ENCODE measurements at regions of chr1 and their contacts with region 1.

Region 1: DNA sequence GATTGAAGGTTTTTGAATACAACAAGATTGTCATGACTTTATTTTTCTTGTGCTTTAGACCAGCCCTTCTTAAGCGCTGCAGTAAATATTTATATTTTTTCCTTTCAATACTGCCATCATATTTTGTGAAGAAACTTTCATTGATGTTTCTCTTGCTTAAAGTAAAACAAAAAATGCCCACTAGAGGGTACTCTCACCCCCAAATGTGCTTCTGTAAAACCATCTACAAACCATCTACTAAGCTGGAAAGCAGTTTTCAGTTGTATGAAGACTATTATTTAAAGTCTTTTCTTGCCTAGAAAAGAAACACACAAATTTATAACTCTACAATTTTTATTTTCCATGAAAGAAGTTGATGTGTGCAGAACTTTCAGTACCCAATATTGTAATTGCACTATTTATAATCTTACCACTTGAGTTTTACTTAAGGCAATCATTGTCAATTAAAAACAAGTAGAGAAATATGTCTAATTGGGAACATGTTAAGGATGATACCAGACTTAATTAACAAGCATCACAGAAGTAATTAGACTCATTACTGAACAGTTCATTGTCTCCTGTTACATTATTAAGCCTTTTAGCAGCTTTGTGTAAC is 10.7 kb downstream of the LEPR start:
- DNase-seq: no peak
- H3K4me3 Mint-ChIP-seq: no peak overlapping the region
- H3K27ac Mint-ChIP-seq: no peak overlapping the region
- H3K4me1 Mint-ChIP-seq: peaks cover 30% of the 10 kb centered on the region
- H3K27me3 Mint-ChIP-seq: no peaks in the 10 kb centered on the region
- CTCF ChIP-seq: no peak

Region 2: DNA sequence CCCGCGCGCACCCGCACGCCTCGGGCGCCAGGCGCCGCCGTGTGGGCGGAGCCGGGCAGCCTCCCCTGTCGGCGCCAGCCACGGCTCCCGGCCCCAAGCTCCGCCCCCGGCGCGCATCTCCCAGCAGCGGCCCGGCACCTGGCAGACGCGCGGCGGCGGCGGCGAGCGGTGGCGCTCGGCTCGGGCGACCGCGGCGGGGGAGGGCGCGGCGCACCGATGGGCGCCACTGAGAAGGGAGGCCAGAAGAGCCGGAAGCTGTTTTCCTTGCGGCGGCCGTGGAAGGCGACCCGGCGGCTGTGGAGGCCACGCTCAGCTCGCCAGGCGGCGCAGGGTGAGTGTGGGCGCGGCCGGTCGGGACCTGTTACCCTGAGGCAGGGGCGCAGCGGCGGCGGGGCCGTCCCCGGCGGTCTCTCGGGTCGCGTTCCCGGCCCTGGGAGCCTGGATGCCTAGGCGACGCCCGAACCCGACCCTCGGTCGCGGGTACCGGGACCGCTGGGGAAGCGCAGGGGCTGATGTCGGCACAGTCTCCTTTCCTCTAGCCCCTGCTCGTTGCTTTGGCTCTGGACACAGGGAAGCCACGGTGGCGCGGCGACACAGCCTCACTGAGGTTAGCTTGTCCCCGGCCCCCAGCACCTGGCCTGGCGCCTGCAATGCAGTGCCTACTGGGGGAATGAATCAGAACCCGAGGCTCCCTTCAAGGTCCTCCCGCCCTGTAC is 176.7 kb before region 1 on chr1:
- CTCF ChIA-PET with region 1: no interaction called
- intact Hi-C with region 1: loop called (anchors 5 kb)
- DNase-seq: peak; percentile 93
- H3K4me3 Mint-ChIP-seq: peak overlapping the region; percentile 80
- H3K27ac Mint-ChIP-seq: peak overlapping the region; percentile 48
- H3K4me1 Mint-ChIP-seq: peaks cover 14% of the 10 kb centered on the region
- H3K27me3 Mint-ChIP-seq: no peaks in the 10 kb centered on the region
- CTCF ChIP-seq: no peak

Region 3: GRCh38 chr1:65509912-65510680 is 78.9 kb after region 1 on chr1:
- CTCF ChIA-PET with region 1: no interaction called
- intact Hi-C with region 1: no loop called
- DNase-seq: no peak
- H3K4me3 Mint-ChIP-seq: no peak overlapping the region
- H3K27ac Mint-ChIP-seq: no peak overlapping the region
- H3K4me1 Mint-ChIP-seq: no peaks in the 10 kb centered on the region
- H3K27me3 Mint-ChIP-seq: no peaks in the 10 kb centered on the region
- CTCF ChIP-seq: no peak

Region 4: DNA sequence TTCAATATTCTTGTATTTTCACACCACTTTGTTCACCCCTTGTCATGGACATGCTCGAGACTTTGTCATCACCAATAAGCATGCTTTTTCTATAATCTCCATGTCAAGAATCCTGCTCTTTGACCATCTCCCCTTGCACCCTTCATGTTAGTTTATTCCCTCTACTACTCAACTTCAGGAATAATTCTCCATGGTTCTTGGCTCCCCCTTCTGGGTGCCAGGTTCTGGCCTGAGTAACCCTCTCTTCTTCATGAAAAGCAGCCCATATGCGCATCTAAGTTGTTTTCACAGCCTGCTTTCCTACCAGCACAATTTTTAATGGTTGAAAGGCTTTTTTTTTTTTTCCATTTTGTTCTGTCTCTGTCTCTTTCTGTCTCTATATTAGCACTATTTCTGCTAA is 149.9 kb after region 1 on chr1:
- CTCF ChIA-PET with region 1: no interaction called
- intact Hi-C with region 1: loop called (anchors 1 kb)
- DNase-seq: peak; percentile 5
- H3K4me3 Mint-ChIP-seq: no peak overlapping the region
- H3K27ac Mint-ChIP-seq: no peak overlapping the region
- H3K4me1 Mint-ChIP-seq: no peaks in the 10 kb centered on the region
- H3K27me3 Mint-ChIP-seq: no peaks in the 10 kb centered on the region
- CTCF ChIP-seq: no peak

Region 5: DNA sequence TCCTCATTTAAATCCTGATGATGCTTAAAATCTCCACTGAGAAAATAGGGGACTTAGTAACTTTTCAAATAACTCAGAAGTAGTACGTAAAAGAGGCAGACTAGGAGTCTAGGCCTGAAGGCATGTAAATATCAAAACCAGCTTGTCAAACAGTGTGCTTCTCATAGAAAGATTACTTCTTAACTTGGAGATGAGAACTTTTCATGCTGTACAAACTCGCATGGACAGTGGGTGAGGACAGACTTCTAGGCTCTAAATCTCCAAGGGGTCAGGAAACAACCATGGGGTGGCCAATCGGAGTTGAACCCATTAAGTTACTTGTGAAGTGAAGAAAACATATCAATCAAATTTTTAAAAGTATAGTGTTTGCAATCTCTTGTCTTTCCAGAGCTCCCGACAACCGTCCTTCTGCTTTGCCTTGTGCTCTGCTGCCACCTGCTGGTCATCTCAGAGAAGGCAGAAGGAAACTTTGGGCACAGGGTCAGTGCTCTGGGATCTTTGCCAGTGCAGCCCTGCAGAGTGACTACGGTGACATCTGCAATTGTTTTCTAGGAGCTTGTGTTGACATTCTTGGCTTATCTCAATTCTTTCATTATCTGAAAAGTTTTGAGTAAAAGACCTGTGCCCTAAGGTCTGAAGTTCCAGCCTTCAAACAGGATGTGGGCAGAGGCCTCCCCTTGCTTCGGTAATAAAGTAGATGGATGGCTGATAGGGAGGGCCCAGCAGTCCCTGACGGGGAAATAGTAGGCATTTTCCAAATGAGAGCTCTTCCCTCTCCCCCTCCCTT is 256.4 kb after region 1 on chr1:
- CTCF ChIA-PET with region 1: interaction called, 9 read pairs
- intact Hi-C with region 1: loop called (anchors 2 kb)
- DNase-seq: peak; percentile 90
- H3K4me3 Mint-ChIP-seq: no peak overlapping the region
- H3K27ac Mint-ChIP-seq: no peak overlapping the region
- H3K4me1 Mint-ChIP-seq: no peaks in the 10 kb centered on the region
- H3K27me3 Mint-ChIP-seq: peaks cover 25% of the 10 kb centered on the region
- CTCF ChIP-seq: peak; percentile 95

Measured in Calu3 (cell line).